Naive thymus-derived CD4-positive, alpha-beta T cell (primary cell): ENCODE measurements at regions of chr17 and their contacts with region 1.

Region 1: GRCh38 chr17:38351412-38352222 is at the start of gene SOCS7:
- DNase-seq: peak; percentile 81 to 96 (median 90)
- ATAC-seq: peak; percentile 95
- H3K4me3 ChIP-seq: peak within 1 kb of the TSS; percentile 69
- H3K4me3 Mint-ChIP-seq: peak within 1 kb of the TSS; percentile 90 to 96 (median 92)
- H3K27ac ChIP-seq: peak within 1 kb of the TSS; percentile 75
- H3K27ac Mint-ChIP-seq: peak within 1 kb of the TSS; percentile 88 to 98 (median 94)
- H3K4me1 ChIP-seq: peaks cover 9 to 21% of the 10 kb centered on the region in 2 donors
- H3K4me1 Mint-ChIP-seq: peaks cover 31 to 55% (median 45%) of the 10 kb centered on the region in 7 donors
- H3K27me3 ChIP-seq: no peaks in the 10 kb centered on the region
- H3K27me3 Mint-ChIP-seq: no peaks in the 10 kb centered on the region
- total RNA-seq, gene SOCS7: 17.0 to 23.3 (median 21.5) TPM

Region 2: GRCh38 chr17:38415250-38416194 is 63.9 kb after region 1 on chr17:
- CTCF ChIA-PET with region 1: interaction called, 81 read pairs
- POLR2A ChIA-PET with region 1: interaction called, 4 read pairs
- intact Hi-C with region 1: loop called in 1 of 2 experiments (anchors 1 kb)
- DNase-seq: no peak
- ATAC-seq: no peak
- H3K4me3 ChIP-seq: no peak overlapping the region
- H3K4me3 Mint-ChIP-seq: peak overlapping the region in 1 of 10 donors; percentile 14
- H3K27ac ChIP-seq: no peak overlapping the region
- H3K27ac Mint-ChIP-seq: peak overlapping the region in 1 of 9 donors; percentile 71
- H3K4me1 ChIP-seq: no peaks in the 10 kb centered on the region
- H3K4me1 Mint-ChIP-seq: peaks cover 0 to 15% (median 3%) of the 10 kb centered on the region in 7 donors
- H3K27me3 ChIP-seq: peaks cover 2% of the 10 kb centered on the region in 2 donors
- H3K27me3 Mint-ChIP-seq: peaks cover 9 to 42% (median 37%) of the 10 kb centered on the region in 5 donors

Region 3: GRCh38 chr17:38485146-38485468 is 133.5 kb after region 1 on chr17:
- CTCF ChIA-PET with region 1: interaction called, 5 read pairs
- POLR2A ChIA-PET with region 1: no interaction called
- intact Hi-C with region 1: loop called in 1 of 2 experiments (anchors 1 kb)
- DNase-seq: no peak
- ATAC-seq: no peak
- H3K4me3 ChIP-seq: no peak overlapping the region
- H3K4me3 Mint-ChIP-seq: no peak overlapping the region
- H3K27ac ChIP-seq: no peak overlapping the region
- H3K27ac Mint-ChIP-seq: no peak overlapping the region
- H3K4me1 ChIP-seq: no peaks in the 10 kb centered on the region
- H3K4me1 Mint-ChIP-seq: peaks cover 0 to 7% (median 5%) of the 10 kb centered on the region in 7 donors
- H3K27me3 ChIP-seq: no peaks in the 10 kb centered on the region
- H3K27me3 Mint-ChIP-seq: peaks cover 0 to 9% (median 0%) of the 10 kb centered on the region in 5 donors

Region 4: GRCh38 chr17:38498186-38498752 is 146.7 kb after region 1 on chr17:
- CTCF ChIA-PET with region 1: no interaction called
- POLR2A ChIA-PET with region 1: no interaction called
- intact Hi-C with region 1: loop called in 1 of 2 experiments (anchors 2 kb)
- DNase-seq: no peak
- ATAC-seq: no peak
- H3K4me3 ChIP-seq: no peak overlapping the region
- H3K4me3 Mint-ChIP-seq: no peak overlapping the region
- H3K27ac ChIP-seq: no peak overlapping the region
- H3K27ac Mint-ChIP-seq: no peak overlapping the region
- H3K4me1 ChIP-seq: no peaks in the 10 kb centered on the region
- H3K4me1 Mint-ChIP-seq: peaks cover 0 to 1% (median 0%) of the 10 kb centered on the region in 7 donors
- H3K27me3 ChIP-seq: no peaks in the 10 kb centered on the region
- H3K27me3 Mint-ChIP-seq: peaks cover 0 to 7% (median 3%) of the 10 kb centered on the region in 5 donors